Mammary epithelial cell (primary cell): ENCODE measurements at regions of chr5 and their contacts with region 1.

Region 1: DNA sequence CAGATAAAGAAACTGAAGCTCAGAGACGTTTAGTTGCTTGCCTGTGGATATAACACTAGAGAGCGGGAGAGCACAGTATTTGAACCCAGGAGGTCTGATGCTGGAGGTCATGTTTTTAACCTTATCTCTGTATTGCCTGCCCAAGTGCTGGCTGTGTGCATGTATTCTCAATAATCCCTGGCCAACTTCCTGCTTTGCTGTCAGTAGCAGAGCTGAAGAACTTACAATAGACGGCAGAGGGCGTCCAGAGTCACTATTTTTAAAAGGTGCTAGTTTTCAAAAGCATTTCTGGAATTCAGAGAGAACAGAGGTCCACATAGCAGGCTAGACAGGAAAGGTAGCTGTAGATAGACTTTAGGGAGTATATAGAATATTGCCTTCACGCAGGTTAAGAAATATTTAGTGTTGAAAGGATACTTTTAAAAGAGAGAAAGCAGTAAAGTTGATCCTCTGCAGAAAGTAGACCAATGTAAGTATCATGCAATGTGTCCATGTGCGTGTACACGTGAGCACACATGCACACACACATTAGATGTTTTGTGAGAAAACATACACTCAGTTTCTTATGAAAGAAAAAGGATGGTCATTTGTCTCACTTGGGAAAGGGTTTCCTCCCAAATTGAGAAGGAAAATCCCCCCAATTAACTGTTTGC is 46.3 kb downstream of the PTCD2 start:
- DNase-seq: peak; percentile 61
- H3K4me3 ChIP-seq: no peak overlapping the region
- H3K27ac ChIP-seq: no peak overlapping the region
- H3K4me1 ChIP-seq: peaks cover 49% of the 10 kb centered on the region
- H3K27me3 ChIP-seq: no peaks in the 10 kb centered on the region
- CTCF ChIP-seq: peak; percentile 75 to 81

Region 2: DNA sequence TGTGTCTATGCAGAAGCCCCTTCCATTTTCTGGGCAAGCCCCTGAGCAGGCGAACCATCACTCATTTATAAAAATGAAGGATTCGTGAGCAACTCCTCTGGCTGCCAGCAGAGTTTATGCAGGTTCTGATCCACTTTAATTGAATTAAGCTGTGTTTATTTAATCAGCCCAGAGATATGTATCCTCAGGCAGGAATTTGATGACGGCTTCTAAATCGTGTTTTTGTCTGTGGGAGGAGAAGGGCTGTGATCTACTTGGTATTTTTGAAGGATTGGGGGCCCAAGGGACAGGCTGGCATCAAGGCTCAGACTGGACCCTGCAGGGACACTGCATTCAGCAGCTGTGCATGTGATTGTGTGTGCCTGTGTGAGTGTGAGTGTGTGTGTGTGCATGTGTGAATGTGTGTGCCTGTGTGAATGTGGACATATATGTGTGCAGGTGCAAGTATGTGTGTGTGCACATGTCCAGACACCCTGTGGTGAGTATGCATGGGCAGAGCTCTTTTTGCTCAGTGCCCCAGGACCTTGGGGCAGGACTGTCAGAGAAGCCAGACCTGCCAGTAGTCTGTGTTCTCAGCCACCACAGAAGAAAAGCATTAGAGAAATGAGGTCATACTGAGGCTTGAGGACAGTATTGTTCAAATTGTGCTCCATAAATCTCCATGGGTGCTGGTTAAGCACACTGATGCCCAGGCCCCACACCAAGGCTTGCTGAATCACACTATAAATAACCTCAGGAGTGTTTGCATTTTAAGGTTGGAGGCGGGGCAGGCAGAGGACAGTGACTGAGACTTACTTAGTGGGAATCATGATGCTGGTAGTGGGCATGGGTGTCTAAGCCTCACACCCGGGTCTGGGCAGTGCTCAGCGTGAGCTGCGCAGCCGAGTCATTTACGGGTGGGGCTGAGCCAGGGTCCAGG is 483.4 kb before region 1 on chr5:
- CTCF ChIA-PET with region 1: no interaction called
- dilution Hi-C with region 1: no loop called
- in situ Hi-C with region 1: no loop called
- intact Hi-C with region 1: no loop called
- DNase-seq: peak; percentile 41
- H3K4me3 ChIP-seq: no peak overlapping the region
- H3K27ac ChIP-seq: no peak overlapping the region
- H3K4me1 ChIP-seq: peaks cover 2% of the 10 kb centered on the region
- H3K27me3 ChIP-seq: no peaks in the 10 kb centered on the region
- CTCF ChIP-seq: no peak

Region 3: GRCh38 chr5:72387985-72388384 is 21.5 kb after region 1 on chr5:
- CTCF ChIA-PET with region 1: no interaction called
- dilution Hi-C with region 1: no loop called
- in situ Hi-C with region 1: no loop called
- intact Hi-C with region 1: loop called (anchors 2 kb)
- DNase-seq: peak; percentile 80
- H3K4me3 ChIP-seq: no peak overlapping the region
- H3K27ac ChIP-seq: peak overlapping the region; percentile 79
- H3K4me1 ChIP-seq: peaks cover 65% of the 10 kb centered on the region
- H3K27me3 ChIP-seq: no peaks in the 10 kb centered on the region
- CTCF ChIP-seq: no peak

Region 4: DNA sequence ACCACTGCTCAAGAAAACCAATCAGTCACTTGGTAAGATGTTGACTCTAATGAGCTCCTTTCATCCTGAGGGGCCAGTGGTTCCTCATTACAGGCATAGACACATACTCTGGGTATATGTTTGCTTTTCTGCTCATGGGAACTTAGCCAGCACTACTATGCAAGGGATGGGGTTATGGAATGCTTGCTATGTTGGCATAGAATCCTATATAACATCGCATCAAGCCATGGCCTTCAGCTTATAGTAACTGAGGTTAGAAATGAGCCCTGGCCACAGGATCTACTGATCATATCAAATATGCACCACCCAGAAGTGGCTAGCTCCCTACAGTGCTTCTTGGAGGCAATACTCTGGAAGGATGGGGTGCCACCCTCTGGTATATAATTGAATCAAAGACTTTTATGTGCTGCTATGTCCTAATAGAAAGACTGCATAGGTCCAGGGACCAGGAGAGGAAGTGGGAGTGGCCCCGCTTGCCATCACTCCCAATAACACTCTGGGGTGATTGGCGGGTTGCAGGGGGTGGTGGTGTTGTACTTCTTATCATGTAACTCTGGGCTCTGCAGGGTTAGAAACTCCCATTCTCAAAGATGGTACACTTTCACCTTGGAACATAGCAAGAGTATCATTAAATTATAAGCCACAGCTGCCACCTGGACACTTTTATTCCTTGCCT is 70.5 kb after region 1 on chr5:
- CTCF ChIA-PET with region 1: interaction called, 4 read pairs
- dilution Hi-C with region 1: no loop called
- in situ Hi-C with region 1: no loop called
- intact Hi-C with region 1: loop called (anchors 1 kb)
- DNase-seq: no peak
- H3K4me3 ChIP-seq: no peak overlapping the region
- H3K27ac ChIP-seq: no peak overlapping the region
- H3K4me1 ChIP-seq: peaks cover 31% of the 10 kb centered on the region
- H3K27me3 ChIP-seq: no peaks in the 10 kb centered on the region
- CTCF ChIP-seq: peak in 1 of 2 donors; percentile 3

Region 5: GRCh38 chr5:72816311-72817145 is 450.1 kb after region 1 on chr5 and contains the start of gene TNPO1:
- CTCF ChIA-PET with region 1: no interaction called
- dilution Hi-C with region 1: loop called (anchors 25 kb)
- in situ Hi-C with region 1: no loop called
- intact Hi-C with region 1: loop called (anchors 1 kb)
- DNase-seq: peak; percentile 93
- H3K4me3 ChIP-seq: peak within 1 kb of the TSS; percentile 79 to 96 (median 90)
- H3K27ac ChIP-seq: peak within 1 kb of the TSS; percentile 95
- H3K4me1 ChIP-seq: peaks cover 6% of the 10 kb centered on the region
- H3K27me3 ChIP-seq: no peaks in the 10 kb centered on the region
- CTCF ChIP-seq: no peak
- total RNA-seq, gene TNPO1: 126 to 179 TPM